HepG2 (cell line): ENCODE measurements at regions of chr9 and their contacts with region 1.

Region 1: GRCh38 chr9:129569502-129570449 is 51.1 kb downstream of the C9orf50 start:
- DNase-seq: peak; percentile 56
- ATAC-seq: peak; percentile 42
- H3K4me3 ChIP-seq: peak overlapping the region; percentile 38 to 61 (median 50)
- H3K27ac ChIP-seq: peak overlapping the region; percentile 80
- H3K4me1 ChIP-seq: peaks cover 70% of the 10 kb centered on the region
- H3K27me3 ChIP-seq: no peaks in the 10 kb centered on the region; a peak in 1 of 5 replicates
- CTCF ChIP-seq: peak; percentile 75
- EP300 ChIP-seq: no peak
- POLR2A ChIP-seq: no peak
- RAD21 ChIP-seq: peak; percentile 73

Region 2: GRCh38 chr9:129487642-129488409 is 82.0 kb before region 1 on chr9:
- CTCF ChIA-PET with region 1: no interaction called
- POLR2A ChIA-PET with region 1: interaction called, 18 read pairs
- in situ Hi-C with region 1: no loop called
- intact Hi-C with region 1: loop called (anchors 5 kb)
- DNase-seq: no peak
- ATAC-seq: peak; percentile 14
- H3K4me3 ChIP-seq: peak overlapping the region; percentile 68 to 86 (median 72); a peak in 5 of 6 replicates
- H3K27ac ChIP-seq: peak overlapping the region; percentile 91
- H3K4me1 ChIP-seq: peaks cover 87% of the 10 kb centered on the region
- H3K27me3 ChIP-seq: no peaks in the 10 kb centered on the region; a peak in 1 of 5 replicates
- CTCF ChIP-seq: no peak
- EP300 ChIP-seq: no peak
- POLR2A ChIP-seq: peak in 1 of 2 experiments; percentile 41; a peak in 1 of 4 replicates
- RAD21 ChIP-seq: no peak; the same call in 1 of the 2 replicates

Region 3: GRCh38 chr9:129584136-129584535 is 14.4 kb after region 1 on chr9:
- CTCF ChIA-PET with region 1: no interaction called
- POLR2A ChIA-PET with region 1: interaction called, 59 read pairs
- in situ Hi-C with region 1: no loop called
- intact Hi-C with region 1: no loop called
- DNase-seq: peak; percentile 82
- ATAC-seq: peak; percentile 74
- H3K4me3 ChIP-seq: no peak overlapping the region
- H3K27ac ChIP-seq: peak overlapping the region; percentile 45
- H3K4me1 ChIP-seq: peaks cover 70% of the 10 kb centered on the region
- H3K27me3 ChIP-seq: no peaks in the 10 kb centered on the region
- CTCF ChIP-seq: no peak
- EP300 ChIP-seq: no peak
- POLR2A ChIP-seq: no peak
- RAD21 ChIP-seq: no peak

Region 4: GRCh38 chr9:129604772-129605171 is 35.0 kb after region 1 on chr9:
- CTCF ChIA-PET with region 1: interaction called, 3 read pairs
- POLR2A ChIA-PET with region 1: interaction called, 10 read pairs
- in situ Hi-C with region 1: no loop called
- intact Hi-C with region 1: loop called (anchors 1 kb)
- DNase-seq: no peak
- ATAC-seq: no peak
- H3K4me3 ChIP-seq: no peak overlapping the region
- H3K27ac ChIP-seq: peak overlapping the region; percentile 31
- H3K4me1 ChIP-seq: peaks cover 88% of the 10 kb centered on the region
- H3K27me3 ChIP-seq: no peaks in the 10 kb centered on the region
- CTCF ChIP-seq: no peak
- EP300 ChIP-seq: no peak
- POLR2A ChIP-seq: no peak
- RAD21 ChIP-seq: no peak

Region 5: GRCh38 chr9:129737479-129738274 is 167.9 kb after region 1 on chr9:
- CTCF ChIA-PET with region 1: no interaction called
- POLR2A ChIA-PET with region 1: no interaction called
- in situ Hi-C with region 1: no loop called
- intact Hi-C with region 1: no loop called
- DNase-seq: peak; percentile 45
- ATAC-seq: peak; percentile 85
- H3K4me3 ChIP-seq: peak overlapping the region; percentile 39 to 67 (median 65); a peak in 4 of 6 replicates
- H3K27ac ChIP-seq: no peak overlapping the region
- H3K4me1 ChIP-seq: 0 out of 2 replicates have a peak, but pooled peaks cover 5% of the 10 kb centered on the region
- H3K27me3 ChIP-seq: peaks cover 7 to 51% of the 10 kb centered on the region in 2 experiments; a peak in 3 of 5 replicates
- CTCF ChIP-seq: peak; percentile 96
- EP300 ChIP-seq: no peak
- POLR2A ChIP-seq: no peak
- RAD21 ChIP-seq: peak; percentile 92